ENCODE measurements at regions of chr7 and their contacts with region 1.

Region 1: GRCh38 chr7:129298268-129298893 is 73.6 kb downstream of the AHCYL2 start:
- DNase-seq: peak; percentile 65
- H3K4me3 ChIP-seq: no peak overlapping the region; a peak in 1 of 4 replicates
- H3K27ac ChIP-seq: no peak overlapping the region
- H3K4me1 ChIP-seq: no peaks in the 10 kb centered on the region
- H3K27me3 ChIP-seq: no peaks in the 10 kb centered on the region
- CTCF ChIP-seq: peak; percentile 98
- EP300 ChIP-seq: no peak
- RAD21 ChIP-seq: peak; percentile 90

Region 2: DNA sequence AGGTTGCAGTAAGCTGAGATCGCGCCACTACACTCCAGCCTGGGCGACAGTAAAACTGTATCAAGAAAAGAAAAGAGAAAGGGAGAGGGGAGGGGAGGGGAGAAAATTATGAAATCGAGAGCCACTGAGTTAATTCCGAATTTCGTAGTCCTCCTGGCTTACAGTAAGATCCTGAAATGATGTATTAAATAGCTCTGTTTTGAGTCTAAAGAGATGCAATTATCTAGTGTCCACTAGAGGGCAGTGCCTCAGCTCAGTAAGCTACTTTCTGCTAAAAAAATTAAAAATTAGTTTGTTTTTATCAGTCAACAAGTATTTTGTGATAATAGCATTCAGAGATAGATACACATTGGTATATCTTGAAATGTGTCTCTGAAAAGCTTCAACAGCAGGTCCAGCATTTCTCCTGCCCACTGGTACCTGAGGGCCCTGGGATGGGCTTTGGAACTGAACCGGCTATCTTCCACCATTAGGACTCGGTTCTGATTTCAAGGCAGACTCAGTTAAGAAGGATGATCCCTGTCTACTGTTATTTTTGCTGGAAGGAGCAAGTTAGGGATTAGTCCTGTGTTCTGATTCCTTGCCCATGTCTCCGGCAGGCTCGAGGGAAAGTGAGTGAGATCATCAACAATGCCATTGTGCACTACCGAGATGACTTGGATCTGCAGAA is 134.4 kb before region 1 on chr7:
- CTCF ChIA-PET with region 1: interaction called, 19 read pairs
- POLR2A ChIA-PET with region 1: no interaction called
- DNase-seq: peak; percentile 76
- H3K4me3 ChIP-seq: no peak overlapping the region; a peak in 1 of 4 replicates
- H3K27ac ChIP-seq: no peak overlapping the region
- H3K4me1 ChIP-seq: peaks cover 0 to 10% of the 10 kb centered on the region in 2 experiments; a peak in 1 of 4 replicates
- H3K27me3 ChIP-seq: no peaks in the 10 kb centered on the region
- CTCF ChIP-seq: peak; percentile 100
- EP300 ChIP-seq: no peak
- RAD21 ChIP-seq: peak; percentile 79

Region 3: GRCh38 chr7:129231666-129232065 is 66.7 kb before region 1 on chr7:
- CTCF ChIA-PET with region 1: interaction called, 14 read pairs
- POLR2A ChIA-PET with region 1: no interaction called
- DNase-seq: no peak
- H3K4me3 ChIP-seq: no peak overlapping the region
- H3K27ac ChIP-seq: no peak overlapping the region
- H3K4me1 ChIP-seq: no peaks in the 10 kb centered on the region; a peak in 3 of 4 replicates
- H3K27me3 ChIP-seq: no peaks in the 10 kb centered on the region
- CTCF ChIP-seq: no peak
- EP300 ChIP-seq: no peak
- RAD21 ChIP-seq: no peak

Region 4: GRCh38 chr7:129271500-129272355 is 26.7 kb before region 1 on chr7:
- CTCF ChIA-PET with region 1: interaction called, 13 read pairs
- POLR2A ChIA-PET with region 1: no interaction called
- DNase-seq: peak; percentile 57
- H3K4me3 ChIP-seq: no peak overlapping the region
- H3K27ac ChIP-seq: no peak overlapping the region
- H3K4me1 ChIP-seq: no peaks in the 10 kb centered on the region
- H3K27me3 ChIP-seq: no peaks in the 10 kb centered on the region
- CTCF ChIP-seq: peak; percentile 71
- EP300 ChIP-seq: peak in 1 of 2 experiments; percentile 48; a peak in 1 of 4 replicates
- RAD21 ChIP-seq: peak; percentile 81

Region 5: DNA sequence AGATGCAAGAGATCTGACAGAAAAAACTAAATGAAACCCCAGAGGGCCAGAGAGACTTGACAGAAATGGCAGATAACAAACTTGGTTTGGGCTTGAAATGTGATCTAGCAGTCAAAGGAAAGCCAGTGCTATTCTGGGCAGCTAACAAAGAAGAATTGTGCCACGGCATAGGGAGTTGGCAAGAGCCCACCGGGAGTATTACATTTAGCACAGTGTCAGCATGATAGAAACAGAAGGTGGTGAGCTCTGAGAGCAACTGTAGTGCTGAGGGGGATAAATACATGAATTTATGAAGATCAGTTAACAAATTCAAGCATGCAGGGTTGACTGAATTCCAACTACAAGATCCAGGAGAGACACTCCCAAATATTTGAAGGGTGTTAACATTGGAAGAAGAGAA is 17.6 kb after region 1 on chr7:
- CTCF ChIA-PET with region 1: interaction called, 50 read pairs
- POLR2A ChIA-PET with region 1: no interaction called
- DNase-seq: no peak
- H3K4me3 ChIP-seq: no peak overlapping the region
- H3K27ac ChIP-seq: no peak overlapping the region
- H3K4me1 ChIP-seq: no peaks in the 10 kb centered on the region
- H3K27me3 ChIP-seq: no peaks in the 10 kb centered on the region
- CTCF ChIP-seq: no peak
- EP300 ChIP-seq: no peak
- RAD21 ChIP-seq: no peak

Region 6: GRCh38 chr7:129351320-129351719 is 52.9 kb after region 1 on chr7:
- CTCF ChIA-PET with region 1: interaction called, 10 read pairs
- POLR2A ChIA-PET with region 1: no interaction called
- DNase-seq: no peak
- H3K4me3 ChIP-seq: no peak overlapping the region
- H3K27ac ChIP-seq: peak overlapping the region in 1 of 2 experiments; percentile 1; a peak in 1 of 4 replicates
- H3K4me1 ChIP-seq: no peaks in the 10 kb centered on the region
- H3K27me3 ChIP-seq: no peaks in the 10 kb centered on the region
- CTCF ChIP-seq: no peak
- EP300 ChIP-seq: no peak
- RAD21 ChIP-seq: no peak